ENCODE measurements at regions of chr14 and their contacts with region 1.

Region 1: DNA sequence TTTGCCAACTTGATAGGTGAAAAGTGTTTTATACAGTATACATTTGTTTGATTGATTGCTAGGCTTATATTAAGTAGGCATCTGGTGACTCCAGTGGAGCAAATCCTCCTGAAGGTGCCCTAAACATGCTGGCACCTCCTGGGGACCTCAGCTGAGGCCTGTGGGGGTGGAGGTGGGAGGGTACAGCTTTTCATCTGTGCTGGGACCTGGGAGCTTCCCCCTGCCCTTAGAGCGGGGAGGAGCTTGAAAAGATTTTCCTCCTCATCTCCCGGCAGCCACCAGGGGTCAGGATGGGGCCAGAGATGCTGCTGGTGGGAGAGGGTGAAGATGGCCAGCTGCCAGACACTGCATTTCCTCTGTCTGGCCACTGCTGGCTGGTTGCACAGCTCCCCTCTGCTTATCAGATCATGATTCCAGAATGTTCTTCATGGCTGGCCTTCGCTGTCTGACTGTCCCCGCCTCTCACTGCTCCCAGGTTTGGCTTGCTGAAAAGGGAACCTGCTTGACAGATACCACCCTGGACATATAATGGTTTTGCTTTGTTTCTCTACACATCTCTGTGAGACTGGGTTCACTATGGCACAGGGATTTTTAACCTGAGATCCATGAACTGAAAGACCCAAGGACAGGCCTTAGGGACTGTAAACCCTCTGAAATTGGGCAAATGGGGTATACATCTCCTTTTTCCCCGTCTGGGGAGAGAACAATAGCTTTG is 10.5 kb upstream of the JPH4 start:
- DNase-seq: peak; percentile 63 to 84 (median 79)
- ATAC-seq: peak; percentile 98
- H3K4me3 ChIP-seq: no peak overlapping the region
- H3K4me3 Mint-ChIP-seq: no peak overlapping the region
- H3K27ac ChIP-seq: no peak overlapping the region
- H3K27ac Mint-ChIP-seq: peak overlapping the region in 2 of 9 donors; percentile 21 to 65
- H3K4me1 ChIP-seq: no peaks in the 10 kb centered on the region
- H3K4me1 Mint-ChIP-seq: peaks cover 3 to 13% (median 9%) of the 10 kb centered on the region in 7 donors
- H3K27me3 ChIP-seq: no peaks in the 10 kb centered on the region
- H3K27me3 Mint-ChIP-seq: peaks cover 9 to 21% (median 14%) of the 10 kb centered on the region in 5 donors

Region 2: GRCh38 chr14:23665375-23666192 is 76.5 kb after region 1 on chr14:
- CTCF ChIA-PET with region 1: interaction called, 3 read pairs
- POLR2A ChIA-PET with region 1: no interaction called
- intact Hi-C with region 1: loop called in 1 of 2 experiments (anchors 1 kb)
- DNase-seq: peak in 5 of 9 donors; percentile 1 to 25 (median 17)
- ATAC-seq: no peak
- H3K4me3 ChIP-seq: no peak overlapping the region
- H3K4me3 Mint-ChIP-seq: no peak overlapping the region
- H3K27ac ChIP-seq: no peak overlapping the region
- H3K27ac Mint-ChIP-seq: no peak overlapping the region
- H3K4me1 ChIP-seq: peaks cover 0 to 7% of the 10 kb centered on the region in 2 donors
- H3K4me1 Mint-ChIP-seq: peaks cover 0 to 4% (median 0%) of the 10 kb centered on the region in 7 donors
- H3K27me3 ChIP-seq: no peaks in the 10 kb centered on the region
- H3K27me3 Mint-ChIP-seq: peaks cover 0 to 4% (median under 1%) of the 10 kb centered on the region in 5 donors

Region 3: GRCh38 chr14:23910101-23910875 is 321.2 kb after region 1 on chr14:
- CTCF ChIA-PET with region 1: interaction called, 7 read pairs
- POLR2A ChIA-PET with region 1: no interaction called
- intact Hi-C with region 1: loop called in 1 of 2 experiments (anchors 1 kb)
- DNase-seq: peak in 2 of 9 donors; percentile 2 to 4
- ATAC-seq: peak; percentile 45
- H3K4me3 ChIP-seq: no peak overlapping the region
- H3K4me3 Mint-ChIP-seq: no peak overlapping the region
- H3K27ac ChIP-seq: no peak overlapping the region
- H3K27ac Mint-ChIP-seq: no peak overlapping the region
- H3K4me1 ChIP-seq: no peaks in the 10 kb centered on the region
- H3K4me1 Mint-ChIP-seq: peaks cover 0 to 1% (median 0%) of the 10 kb centered on the region in 7 donors
- H3K27me3 ChIP-seq: no peaks in the 10 kb centered on the region
- H3K27me3 Mint-ChIP-seq: peaks cover 8 to 39% (median 20%) of the 10 kb centered on the region in 5 donors

Region 4: DNA sequence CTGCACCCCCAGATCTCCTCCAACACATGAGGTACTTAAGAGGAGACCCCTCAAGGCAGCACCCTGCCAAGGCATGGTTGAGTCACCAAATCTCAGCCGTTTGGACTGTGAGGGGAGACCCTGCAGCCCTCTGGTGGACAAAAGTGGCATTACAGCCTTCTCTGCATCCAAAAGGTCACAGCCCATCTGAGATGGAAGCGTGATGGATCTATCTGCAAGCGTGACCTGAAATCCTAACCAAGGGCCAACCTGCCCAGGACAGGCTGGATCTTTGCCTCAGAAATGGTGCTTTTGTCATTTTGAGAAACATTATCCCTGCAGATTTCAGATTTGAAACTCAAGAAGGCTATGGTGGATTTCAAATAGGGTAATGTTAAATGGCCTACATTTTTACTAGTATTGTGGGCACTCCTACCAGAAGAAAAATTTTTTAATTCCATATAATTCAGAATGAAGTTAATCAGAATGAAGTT is 340.8 kb after region 1 on chr14:
- CTCF ChIA-PET with region 1: interaction called, 25 read pairs
- POLR2A ChIA-PET with region 1: interaction called, 5 read pairs
- intact Hi-C with region 1: loop called (anchors 1 kb)
- DNase-seq: peak; percentile 54 to 81 (median 71)
- ATAC-seq: peak; percentile 92
- H3K4me3 ChIP-seq: no peak overlapping the region
- H3K4me3 Mint-ChIP-seq: no peak overlapping the region
- H3K27ac ChIP-seq: no peak overlapping the region
- H3K27ac Mint-ChIP-seq: no peak overlapping the region
- H3K4me1 ChIP-seq: no peaks in the 10 kb centered on the region
- H3K4me1 Mint-ChIP-seq: no peaks in the 10 kb centered on the region
- H3K27me3 ChIP-seq: no peaks in the 10 kb centered on the region
- H3K27me3 Mint-ChIP-seq: peaks cover 0 to 8% (median 0%) of the 10 kb centered on the region in 5 donors

Measured in naive thymus-derived CD4-positive, alpha-beta T cell (primary cell).